Endothelial cell of umbilical vein (primary cell): ENCODE measurements at regions of chr4 and their contacts with region 1.

Region 1: DNA sequence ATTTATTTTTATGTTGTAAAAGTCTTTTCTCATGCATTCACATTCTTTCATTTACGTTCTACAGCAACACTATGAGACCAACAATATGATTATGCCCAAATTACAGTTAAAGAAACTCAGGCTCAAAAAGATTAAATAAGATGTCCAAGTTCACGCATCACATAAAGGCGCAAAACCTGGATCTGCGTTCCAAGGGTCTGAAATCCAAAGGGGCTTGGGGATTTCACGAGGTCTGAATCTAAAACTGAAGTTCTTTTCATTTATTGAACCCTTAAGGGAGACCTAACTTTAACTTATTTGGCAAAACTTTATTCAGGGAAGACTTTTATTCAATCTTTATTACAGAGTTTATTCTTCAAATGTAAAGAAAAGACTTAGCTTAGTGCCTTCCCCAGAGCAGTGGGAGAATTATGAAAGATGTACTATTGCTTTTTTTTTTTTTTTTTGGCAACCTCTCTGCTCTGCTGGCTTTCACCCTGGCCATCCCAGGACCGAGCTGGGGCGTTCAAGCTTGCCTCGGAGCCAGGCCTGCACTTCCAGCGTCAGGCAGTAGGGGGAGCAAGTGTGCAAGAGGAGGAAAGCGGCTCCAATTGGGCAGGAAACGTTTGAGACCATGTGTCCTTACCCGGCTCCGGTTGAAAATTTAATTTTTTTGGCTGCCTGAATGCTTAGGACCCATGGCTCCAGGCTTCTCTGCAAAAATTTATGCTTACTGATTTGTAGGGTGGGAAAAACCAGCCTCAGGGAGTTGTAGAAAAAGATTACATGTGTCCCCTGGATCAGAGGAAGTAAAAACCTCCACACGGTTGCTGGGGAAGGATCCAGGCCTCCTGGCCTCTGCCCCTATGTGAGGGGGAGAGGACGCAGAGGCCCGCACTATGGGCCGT is 344.3 kb upstream of the KLF3 start:
- DNase-seq: peak; percentile 89
- H3K4me3 ChIP-seq: peak overlapping the region in 1 of 3 experiments; percentile 41
- H3K27ac ChIP-seq: peak overlapping the region; percentile 67
- H3K4me1 ChIP-seq: peaks cover 16% of the 10 kb centered on the region
- H3K27me3 ChIP-seq: no peaks in the 10 kb centered on the region
- CTCF ChIP-seq: peak; percentile 97 to 98
- POLR2A ChIP-seq: no peak

Region 2: DNA sequence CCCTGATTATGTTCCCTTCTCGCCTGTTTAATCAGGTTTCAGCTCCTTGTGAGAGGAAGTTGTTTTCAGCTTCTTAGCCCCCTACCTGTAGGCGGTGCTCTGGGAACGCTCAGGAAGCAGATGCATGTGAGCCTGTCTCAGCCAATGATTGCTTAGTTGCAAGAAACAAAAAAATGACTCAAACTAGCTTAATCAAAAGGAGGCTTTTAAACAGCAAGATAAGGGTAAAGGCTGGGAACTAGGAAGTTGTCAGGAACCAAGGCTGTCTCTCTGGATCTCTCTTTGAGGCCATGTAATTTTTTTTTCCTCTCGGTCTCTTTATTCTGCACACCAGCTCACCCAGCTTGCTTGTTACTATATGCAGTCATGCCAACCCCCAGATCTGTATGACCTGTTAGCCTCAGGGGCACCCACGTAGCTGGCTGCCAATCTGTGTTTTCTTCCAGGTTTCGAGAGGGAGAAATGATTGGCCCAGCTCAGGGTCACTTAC is 250.4 kb before region 1 on chr4:
- CTCF ChIA-PET with region 1: interaction called, 16 read pairs
- POLR2A ChIA-PET with region 1: no interaction called
- dilution Hi-C with region 1: no loop called
- intact Hi-C with region 1: no loop called
- DNase-seq: peak; percentile 38
- H3K4me3 ChIP-seq: no peak overlapping the region
- H3K27ac ChIP-seq: no peak overlapping the region
- H3K4me1 ChIP-seq: peaks cover 10% of the 10 kb centered on the region
- H3K27me3 ChIP-seq: no peaks in the 10 kb centered on the region
- CTCF ChIP-seq: no peak
- POLR2A ChIP-seq: no peak

Region 3: GRCh38 chr4:38290366-38290765 is 29.3 kb before region 1 on chr4:
- CTCF ChIA-PET with region 1: interaction called, 10 read pairs
- POLR2A ChIA-PET with region 1: no interaction called
- dilution Hi-C with region 1: no loop called
- intact Hi-C with region 1: loop called (anchors 1 kb)
- DNase-seq: peak; percentile 87
- H3K4me3 ChIP-seq: no peak overlapping the region
- H3K27ac ChIP-seq: no peak overlapping the region
- H3K4me1 ChIP-seq: peaks cover 13% of the 10 kb centered on the region
- H3K27me3 ChIP-seq: no peaks in the 10 kb centered on the region
- CTCF ChIP-seq: no peak
- POLR2A ChIP-seq: no peak

Region 4: GRCh38 chr4:38669208-38669607 is 349.5 kb after region 1 on chr4:
- CTCF ChIA-PET with region 1: interaction called, 53 read pairs
- POLR2A ChIA-PET with region 1: interaction called, 5 read pairs
- dilution Hi-C with region 1: no loop called
- intact Hi-C with region 1: no loop called
- DNase-seq: peak; percentile 86
- H3K4me3 ChIP-seq: peak overlapping the region in 1 of 3 experiments; percentile 67
- H3K27ac ChIP-seq: peak overlapping the region; percentile 99
- H3K4me1 ChIP-seq: peaks cover 75% of the 10 kb centered on the region
- H3K27me3 ChIP-seq: no peaks in the 10 kb centered on the region
- CTCF ChIP-seq: no peak
- POLR2A ChIP-seq: no peak

Region 5: DNA sequence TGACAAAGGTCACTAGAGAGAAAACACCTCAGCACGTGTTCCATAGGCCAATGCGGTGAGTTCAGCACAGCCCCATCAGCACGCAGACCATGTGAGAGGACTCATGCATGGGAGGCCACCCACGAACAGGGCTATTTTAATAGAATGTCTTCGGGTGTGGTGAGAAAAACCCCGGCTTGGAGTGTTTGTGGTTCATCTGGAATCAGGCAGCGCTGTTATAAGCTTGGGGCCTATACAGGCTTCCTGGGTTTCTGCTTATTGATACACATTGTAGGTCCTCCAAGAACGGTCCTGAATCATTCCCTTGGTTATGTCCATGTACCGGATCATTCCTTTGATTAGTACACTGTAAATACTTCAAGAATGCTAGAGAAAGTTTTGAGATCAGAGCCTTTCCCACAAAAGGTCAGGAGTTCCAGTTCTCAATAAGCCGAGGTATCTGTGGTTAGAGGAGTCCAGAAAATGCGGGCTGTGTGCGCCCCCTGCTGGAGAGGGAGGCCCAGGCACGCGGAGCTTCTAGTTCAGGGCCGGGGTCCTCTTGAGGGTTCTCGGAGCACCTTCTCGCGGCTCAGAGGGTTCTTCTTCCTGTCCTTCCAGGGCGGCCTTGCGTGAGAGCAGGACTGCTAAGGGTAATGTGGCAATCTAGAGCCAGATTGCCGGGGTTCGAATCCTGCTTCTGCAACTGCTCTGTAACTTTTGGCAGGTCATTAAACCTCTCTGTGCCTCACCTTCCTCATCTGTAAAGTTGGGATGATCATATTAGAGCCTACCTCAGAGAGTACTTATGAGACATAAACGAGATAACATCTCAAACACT is 411.3 kb after region 1 on chr4:
- CTCF ChIA-PET with region 1: interaction called, 11 read pairs
- POLR2A ChIA-PET with region 1: no interaction called
- dilution Hi-C with region 1: no loop called
- intact Hi-C with region 1: loop called (anchors 1 kb)
- DNase-seq: peak; percentile 73
- H3K4me3 ChIP-seq: no peak overlapping the region
- H3K27ac ChIP-seq: no peak overlapping the region
- H3K4me1 ChIP-seq: no peaks in the 10 kb centered on the region
- H3K27me3 ChIP-seq: peaks cover 0 to 4% of the 10 kb centered on the region in 2 experiments
- CTCF ChIP-seq: peak; percentile 93 to 96
- POLR2A ChIP-seq: no peak

Region 6: GRCh38 chr4:38832624-38833528 is 513.2 kb after region 1 on chr4:
- CTCF ChIA-PET with region 1: no interaction called
- POLR2A ChIA-PET with region 1: no interaction called
- dilution Hi-C with region 1: no loop called
- intact Hi-C with region 1: no loop called
- DNase-seq: no peak
- H3K4me3 ChIP-seq: no peak overlapping the region
- H3K27ac ChIP-seq: no peak overlapping the region
- H3K4me1 ChIP-seq: peaks cover 6% of the 10 kb centered on the region
- H3K27me3 ChIP-seq: peaks cover 0 to 7% of the 10 kb centered on the region in 2 experiments
- CTCF ChIP-seq: peak in 1 of 2 donors; percentile 45
- POLR2A ChIP-seq: no peak

Region 7: GRCh38 chr4:39243462-39243861 is 923.8 kb after region 1 on chr4:
- CTCF ChIA-PET with region 1: no interaction called
- POLR2A ChIA-PET with region 1: no interaction called
- dilution Hi-C with region 1: no loop called
- intact Hi-C with region 1: no loop called
- DNase-seq: no peak
- H3K4me3 ChIP-seq: no peak overlapping the region
- H3K27ac ChIP-seq: no peak overlapping the region
- H3K4me1 ChIP-seq: no peaks in the 10 kb centered on the region
- H3K27me3 ChIP-seq: no peaks in the 10 kb centered on the region
- CTCF ChIP-seq: no peak
- POLR2A ChIP-seq: no peak